ENCODE measurements at regions of chr5 and their contacts with region 1.

Region 1: GRCh38 chr5:77560677-77561263 is 68.7 kb upstream of the WDR41 start:
- DNase-seq: peak; percentile 48
- ATAC-seq: peak; percentile 65
- H3K4me3 ChIP-seq: no peak overlapping the region
- H3K27ac ChIP-seq: no peak overlapping the region
- H3K4me1 ChIP-seq: no peaks in the 10 kb centered on the region
- H3K27me3 ChIP-seq: no peaks in the 10 kb centered on the region
- CTCF ChIP-seq: peak; percentile 29 to 62 (median 45); a peak in 5 of 6 replicates
- EP300 ChIP-seq: no peak
- POLR2A ChIP-seq: no peak
- RAD21 ChIP-seq: peak; percentile 87

Region 2: GRCh38 chr5:77620426-77620825 is 59.7 kb after region 1 on chr5:
- CTCF ChIA-PET with region 1: interaction called, 8 read pairs
- POLR2A ChIA-PET with region 1: no interaction called
- RAD21 ChIA-PET with region 1: interaction called, 6 read pairs
- SMC1A ChIA-PET with region 1: interaction called, 24 read pairs
- in situ Hi-C with region 1: no loop called
- intact Hi-C with region 1: no loop called
- DNase-seq: no peak
- ATAC-seq: peak; percentile 65
- H3K4me3 ChIP-seq: no peak overlapping the region
- H3K27ac ChIP-seq: no peak overlapping the region
- H3K4me1 ChIP-seq: no peaks in the 10 kb centered on the region
- H3K27me3 ChIP-seq: no peaks in the 10 kb centered on the region; a peak in 1 of 4 replicates
- CTCF ChIP-seq: peak in 1 of 3 experiments; percentile 11; a peak in 1 of 6 replicates
- EP300 ChIP-seq: no peak
- POLR2A ChIP-seq: no peak
- RAD21 ChIP-seq: no peak

Region 3: GRCh38 chr5:77972469-77973252 is 411.9 kb after region 1 on chr5:
- CTCF ChIA-PET with region 1: interaction called, 3 read pairs
- POLR2A ChIA-PET with region 1: no interaction called
- RAD21 ChIA-PET with region 1: interaction called, 5 read pairs
- SMC1A ChIA-PET with region 1: interaction called, 6 read pairs
- in situ Hi-C with region 1: no loop called
- intact Hi-C with region 1: loop called (anchors 5 kb)
- DNase-seq: no peak
- ATAC-seq: peak; percentile 91
- H3K4me3 ChIP-seq: peak overlapping the region; percentile 61
- H3K27ac ChIP-seq: no peak overlapping the region
- H3K4me1 ChIP-seq: peaks cover 8% of the 10 kb centered on the region
- H3K27me3 ChIP-seq: 0 out of 4 replicates have a peak, but pooled peaks cover 0 to 4% of the 10 kb centered on the region in 2 experiments
- CTCF ChIP-seq: peak; percentile 50 to 53 (median 51); a peak in 5 of 6 replicates
- EP300 ChIP-seq: no peak
- POLR2A ChIP-seq: no peak
- RAD21 ChIP-seq: peak; percentile 76

Region 4: GRCh38 chr5:78008356-78008967 is 447.7 kb after region 1 on chr5:
- CTCF ChIA-PET with region 1: interaction called, 6 read pairs
- POLR2A ChIA-PET with region 1: no interaction called
- RAD21 ChIA-PET with region 1: interaction called, 7 read pairs
- SMC1A ChIA-PET with region 1: interaction called, 17 read pairs
- in situ Hi-C with region 1: no loop called
- intact Hi-C with region 1: loop called (anchors 2 kb)
- DNase-seq: no peak
- ATAC-seq: peak; percentile 84
- H3K4me3 ChIP-seq: no peak overlapping the region
- H3K27ac ChIP-seq: no peak overlapping the region
- H3K4me1 ChIP-seq: peaks cover 3% of the 10 kb centered on the region; the same call in 1 of the 2 replicates
- H3K27me3 ChIP-seq: no peaks in the 10 kb centered on the region
- CTCF ChIP-seq: peak; percentile 77 to 83 (median 79)
- EP300 ChIP-seq: no peak
- POLR2A ChIP-seq: no peak
- RAD21 ChIP-seq: peak; percentile 89

Region 5: GRCh38 chr5:78269088-78269703 is 708.4 kb after region 1 on chr5:
- CTCF ChIA-PET with region 1: interaction called, 10 read pairs
- POLR2A ChIA-PET with region 1: no interaction called
- RAD21 ChIA-PET with region 1: interaction called, 9 read pairs
- SMC1A ChIA-PET with region 1: interaction called, 4 read pairs
- in situ Hi-C with region 1: no loop called
- intact Hi-C with region 1: no loop called
- DNase-seq: no peak
- ATAC-seq: peak; percentile 84
- H3K4me3 ChIP-seq: no peak overlapping the region
- H3K27ac ChIP-seq: no peak overlapping the region
- H3K4me1 ChIP-seq: peaks cover 10% of the 10 kb centered on the region; the same call in 1 of the 2 replicates
- H3K27me3 ChIP-seq: no peaks in the 10 kb centered on the region
- CTCF ChIP-seq: peak in 2 of 3 experiments; percentile 17 to 42; a peak in 4 of 6 replicates
- EP300 ChIP-seq: no peak
- POLR2A ChIP-seq: no peak
- RAD21 ChIP-seq: peak; percentile 42; the same call in 1 of the 2 replicates

Measured in GM12878 (cell line).